Common myeloid progenitor, CD34-positive (primary cell): ENCODE measurements at regions of chr6 and their contacts with region 1.

Region 1: DNA sequence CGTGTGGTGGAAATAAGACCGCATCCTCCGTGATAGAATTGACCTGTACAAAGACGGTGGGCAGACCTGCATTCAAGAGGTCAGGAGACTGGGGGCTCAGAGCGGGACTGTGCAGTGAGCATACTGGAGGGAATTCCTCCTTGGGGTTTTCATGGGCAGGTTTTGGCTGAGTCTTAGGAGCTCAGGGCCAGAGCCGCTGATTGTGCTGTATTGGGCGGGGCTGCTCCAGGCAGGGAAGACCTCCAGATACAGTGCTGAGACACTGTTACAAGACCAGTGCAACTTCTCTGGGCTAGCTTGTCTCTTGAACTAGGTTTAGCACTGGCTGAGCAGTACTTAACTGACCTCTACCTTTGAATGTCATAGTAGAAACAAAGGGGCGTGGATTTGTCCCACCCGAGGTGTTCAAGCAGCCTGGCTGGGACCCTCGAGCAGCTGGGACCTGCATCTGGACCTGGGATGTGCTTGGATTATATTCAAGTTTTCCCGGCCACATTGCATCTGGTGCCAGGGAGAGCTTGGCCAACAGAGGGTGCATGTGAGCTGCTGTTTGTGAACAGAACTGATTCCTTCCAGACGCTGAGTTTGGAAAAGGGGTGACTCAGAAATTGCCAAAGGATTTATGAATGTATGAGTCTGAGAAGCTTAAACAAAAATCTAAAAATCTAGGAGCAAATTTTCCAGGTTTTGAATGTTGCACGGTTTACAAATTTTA is 33.4 kb upstream of the SLC22A1 start:
- DNase-seq: peak in 2 of 3 donors; percentile 17 to 33
- H3K4me3 ChIP-seq: no peak overlapping the region
- H3K27ac ChIP-seq: no peak overlapping the region
- H3K4me1 ChIP-seq: no peaks in the 10 kb centered on the region
- H3K27me3 ChIP-seq: peaks cover 0 to 4% (median 0%) of the 10 kb centered on the region in 5 experiments

Region 2: DNA sequence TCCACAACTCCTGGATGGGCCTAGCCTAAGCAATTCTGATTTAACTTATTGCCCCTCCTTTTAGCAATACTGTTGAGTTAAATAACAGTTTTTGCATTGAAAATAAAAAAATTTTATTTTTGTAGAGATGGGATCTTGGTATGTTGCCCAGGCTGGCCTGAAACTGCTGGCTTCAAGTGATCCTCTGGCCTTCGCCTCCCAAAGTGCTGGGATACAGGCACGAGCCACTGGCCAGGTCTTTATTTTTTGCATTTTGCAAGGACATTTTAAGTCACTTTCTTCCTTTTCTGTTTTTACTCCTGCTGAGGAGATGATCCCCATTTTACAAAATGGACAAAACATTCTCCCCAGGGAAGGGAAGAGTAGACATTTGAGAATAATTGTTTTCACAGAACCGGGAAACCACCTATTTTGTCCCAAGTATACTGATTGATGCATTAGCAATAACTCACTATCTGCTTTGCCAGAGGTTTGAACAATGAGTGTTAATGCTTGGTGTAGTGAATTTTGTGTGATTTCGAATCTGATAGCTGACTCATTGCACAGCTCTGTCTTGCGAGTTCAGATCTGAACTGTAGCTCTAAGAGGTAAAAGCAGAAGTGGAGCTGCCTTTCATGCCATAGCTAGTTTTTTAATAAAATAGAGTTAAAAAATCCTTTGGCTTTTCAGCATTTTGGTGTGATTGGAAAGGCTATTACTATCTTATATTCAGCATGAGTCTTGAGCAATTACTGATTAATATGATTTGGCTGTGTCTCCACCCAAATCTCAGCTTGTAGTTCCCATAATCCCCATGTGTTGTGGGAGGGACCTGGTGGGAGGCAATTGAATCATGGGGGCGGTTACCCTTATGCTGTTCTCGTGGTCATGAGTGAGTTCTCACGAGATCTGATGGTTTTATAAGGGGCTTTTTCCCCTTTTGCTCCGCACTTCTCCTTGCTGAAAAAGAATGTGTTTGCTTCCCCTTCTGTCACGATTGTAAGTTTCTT is 98.4 kb before region 1 on chr6:
- CTCF ChIA-PET with region 1: no interaction called
- POLR2A ChIA-PET with region 1: no interaction called
- DNase-seq: peak in 2 of 3 donors; percentile 78 to 84
- H3K4me3 ChIP-seq: no peak overlapping the region
- H3K27ac ChIP-seq: peak overlapping the region in 1 of 2 experiments; percentile 56
- H3K4me1 ChIP-seq: peaks cover 0 to 16% (median 3%) of the 10 kb centered on the region in 4 experiments
- H3K27me3 ChIP-seq: peaks cover 0 to 63% (median 9%) of the 10 kb centered on the region in 5 experiments

Region 3: DNA sequence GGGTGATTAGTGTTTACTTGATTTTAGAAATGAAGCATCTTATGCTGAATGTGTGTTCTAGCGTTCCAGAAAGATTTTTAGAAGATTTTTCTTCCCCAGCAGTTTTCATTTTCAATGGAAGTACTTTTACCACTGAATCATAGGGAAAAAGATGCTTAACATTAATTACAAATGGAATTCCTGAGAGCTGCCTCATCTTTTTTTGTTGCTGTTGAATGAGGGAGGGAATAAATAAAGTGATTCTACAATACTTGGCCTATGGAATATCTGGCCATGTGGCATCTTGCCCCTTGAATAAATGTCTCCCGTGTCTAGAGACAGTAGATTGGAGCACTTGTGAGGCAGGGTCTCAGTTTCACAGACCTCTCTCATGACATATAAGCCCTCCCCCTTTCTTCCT is 10.7 kb before region 1 on chr6:
- CTCF ChIA-PET with region 1: interaction called, 21 read pairs
- POLR2A ChIA-PET with region 1: no interaction called
- DNase-seq: no peak
- H3K4me3 ChIP-seq: no peak overlapping the region
- H3K27ac ChIP-seq: no peak overlapping the region
- H3K4me1 ChIP-seq: no peaks in the 10 kb centered on the region
- H3K27me3 ChIP-seq: peaks cover 0 to 6% (median 0%) of the 10 kb centered on the region in 5 experiments

Region 4: GRCh38 chr6:160102956-160103824 is 15.0 kb after region 1 on chr6:
- CTCF ChIA-PET with region 1: interaction called, 15 read pairs
- POLR2A ChIA-PET with region 1: no interaction called
- DNase-seq: peak; percentile 47 to 67 (median 53)
- H3K4me3 ChIP-seq: no peak overlapping the region
- H3K27ac ChIP-seq: no peak overlapping the region
- H3K4me1 ChIP-seq: peaks cover 0 to 24% (median 19%) of the 10 kb centered on the region in 4 experiments
- H3K27me3 ChIP-seq: peaks cover 0 to 4% (median 0%) of the 10 kb centered on the region in 5 experiments

Region 5: DNA sequence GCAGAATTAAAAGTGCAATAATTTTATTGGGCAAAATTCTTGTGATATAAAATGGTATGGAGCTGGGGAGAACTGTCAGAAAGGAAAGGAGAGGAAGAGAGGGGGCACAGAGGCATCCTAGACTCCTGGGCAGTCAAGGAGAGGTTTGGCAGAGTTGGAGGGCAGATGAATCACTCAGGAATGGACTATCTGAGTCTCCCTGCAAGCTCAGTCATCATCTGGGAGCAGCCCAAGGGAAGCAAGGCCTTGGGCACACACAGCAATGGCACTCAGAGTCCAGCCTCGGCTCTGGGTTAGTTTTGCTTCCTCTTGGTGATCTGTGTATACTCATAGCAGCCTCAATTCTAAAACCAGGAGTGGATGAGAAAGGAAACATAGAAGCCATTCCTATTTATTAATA is 100.5 kb after region 1 on chr6:
- CTCF ChIA-PET with region 1: no interaction called
- POLR2A ChIA-PET with region 1: no interaction called
- DNase-seq: no peak
- H3K4me3 ChIP-seq: no peak overlapping the region
- H3K27ac ChIP-seq: no peak overlapping the region
- H3K4me1 ChIP-seq: no peaks in the 10 kb centered on the region
- H3K27me3 ChIP-seq: no peaks in the 10 kb centered on the region

Region 6: GRCh38 chr6:160297310-160297709 is 209.1 kb after region 1 on chr6:
- CTCF ChIA-PET with region 1: no interaction called
- POLR2A ChIA-PET with region 1: no interaction called
- DNase-seq: no peak
- H3K4me3 ChIP-seq: no peak overlapping the region
- H3K27ac ChIP-seq: no peak overlapping the region
- H3K4me1 ChIP-seq: no peaks in the 10 kb centered on the region
- H3K27me3 ChIP-seq: no peaks in the 10 kb centered on the region

Region 7: DNA sequence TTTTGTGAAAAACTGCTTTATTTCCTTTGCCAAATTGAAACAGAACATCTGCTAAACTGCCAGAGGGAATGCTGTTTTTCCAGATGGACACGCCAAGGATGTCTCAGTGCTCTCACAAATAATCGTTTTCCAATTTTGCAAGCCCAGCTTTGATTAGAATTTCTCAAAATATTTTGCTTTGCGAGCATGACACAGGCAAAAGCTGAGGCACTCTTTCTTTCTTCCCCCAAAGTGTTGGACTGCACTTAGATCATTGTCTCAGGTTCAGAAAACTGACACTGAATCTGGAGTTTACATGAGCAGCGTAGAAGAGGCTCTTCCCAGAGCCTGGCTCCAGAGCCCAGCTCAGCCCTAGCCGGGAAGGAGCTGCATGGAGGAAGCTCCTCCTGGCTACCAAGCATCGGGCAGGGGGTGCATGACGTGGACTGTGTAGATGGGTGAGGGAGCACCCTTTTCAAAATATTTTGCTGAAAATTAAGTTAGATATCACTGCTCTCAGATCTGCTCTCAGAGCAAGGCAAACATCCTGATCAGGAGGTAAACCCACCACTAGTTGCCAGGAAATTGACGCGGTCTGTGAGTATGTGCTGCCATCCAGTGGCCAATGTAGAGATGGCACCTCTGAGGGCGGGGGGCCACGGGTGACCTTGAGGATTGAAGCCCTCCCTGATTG is 367.5 kb after region 1 on chr6:
- CTCF ChIA-PET with region 1: interaction called, 10 read pairs
- POLR2A ChIA-PET with region 1: no interaction called
- DNase-seq: peak; percentile 56 to 75 (median 73)
- H3K4me3 ChIP-seq: no peak overlapping the region
- H3K27ac ChIP-seq: no peak overlapping the region
- H3K4me1 ChIP-seq: peaks cover 7 to 42% (median 19%) of the 10 kb centered on the region in 4 experiments
- H3K27me3 ChIP-seq: peaks cover 0 to 73% (median 13%) of the 10 kb centered on the region in 5 experiments